Thyroid gland (tissue), 4 donors: ENCODE measurements at regions of chr16 and their contacts with region 1.

Region 1: DNA sequence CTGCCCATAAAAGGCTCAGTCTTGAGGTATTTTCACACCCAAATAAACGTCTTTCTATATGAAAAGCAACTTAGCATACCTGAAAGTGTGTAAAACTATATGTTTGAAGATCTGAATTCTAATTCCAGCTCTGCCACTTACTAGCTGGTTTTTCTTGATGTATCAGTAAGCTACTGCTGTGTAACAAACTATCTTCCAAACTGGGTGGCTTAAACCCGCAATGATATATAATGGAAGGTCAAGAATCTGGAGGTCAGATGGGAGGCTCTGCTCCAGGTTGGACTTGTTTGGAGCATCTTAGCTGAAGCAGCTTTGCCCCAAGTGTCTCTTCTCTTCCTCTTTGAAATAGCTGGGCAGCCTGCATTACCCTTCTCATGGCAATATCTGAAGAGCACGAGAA is 164.3 kb upstream of the IRX5 start:
- DNase-seq: no peak
- H3K4me3 ChIP-seq: no peak overlapping the region
- H3K27ac ChIP-seq: no peak overlapping the region
- H3K4me1 ChIP-seq: no peaks in the 10 kb centered on the region
- H3K27me3 ChIP-seq: no peaks in the 10 kb centered on the region
- CTCF ChIP-seq: no peak
- POLR2A ChIP-seq: no peak

Region 2: DNA sequence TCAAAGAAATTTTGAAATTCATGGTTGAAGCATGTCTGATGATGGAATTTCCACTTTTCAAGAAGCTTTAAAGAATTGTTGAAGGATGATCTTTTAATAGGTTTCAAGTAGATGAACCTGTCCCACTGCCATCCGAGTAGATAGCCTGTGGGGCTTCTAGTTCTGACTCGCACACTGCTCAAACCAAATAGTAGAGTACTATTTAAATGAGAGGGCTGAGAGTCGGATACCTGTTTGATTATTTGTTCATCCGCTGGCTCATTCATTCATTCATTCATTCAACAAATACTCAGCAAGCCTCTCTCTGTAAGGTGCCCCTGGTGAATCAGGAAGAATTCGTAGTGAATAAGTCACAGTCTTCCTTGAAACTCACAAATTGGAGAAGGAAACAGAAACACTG is 56.1 kb after region 1 on chr16:
- intact Hi-C with region 1: loop called (anchors 10 kb)
- DNase-seq: no peak
- H3K4me3 ChIP-seq: no peak overlapping the region
- H3K27ac ChIP-seq: no peak overlapping the region
- H3K4me1 ChIP-seq: no peaks in the 10 kb centered on the region
- H3K27me3 ChIP-seq: no peaks in the 10 kb centered on the region
- CTCF ChIP-seq: no peak
- POLR2A ChIP-seq: no peak